Gastrocnemius medialis (tissue), 4 donors: ENCODE measurements at regions of chr10 and their contacts with region 1.

Region 1: DNA sequence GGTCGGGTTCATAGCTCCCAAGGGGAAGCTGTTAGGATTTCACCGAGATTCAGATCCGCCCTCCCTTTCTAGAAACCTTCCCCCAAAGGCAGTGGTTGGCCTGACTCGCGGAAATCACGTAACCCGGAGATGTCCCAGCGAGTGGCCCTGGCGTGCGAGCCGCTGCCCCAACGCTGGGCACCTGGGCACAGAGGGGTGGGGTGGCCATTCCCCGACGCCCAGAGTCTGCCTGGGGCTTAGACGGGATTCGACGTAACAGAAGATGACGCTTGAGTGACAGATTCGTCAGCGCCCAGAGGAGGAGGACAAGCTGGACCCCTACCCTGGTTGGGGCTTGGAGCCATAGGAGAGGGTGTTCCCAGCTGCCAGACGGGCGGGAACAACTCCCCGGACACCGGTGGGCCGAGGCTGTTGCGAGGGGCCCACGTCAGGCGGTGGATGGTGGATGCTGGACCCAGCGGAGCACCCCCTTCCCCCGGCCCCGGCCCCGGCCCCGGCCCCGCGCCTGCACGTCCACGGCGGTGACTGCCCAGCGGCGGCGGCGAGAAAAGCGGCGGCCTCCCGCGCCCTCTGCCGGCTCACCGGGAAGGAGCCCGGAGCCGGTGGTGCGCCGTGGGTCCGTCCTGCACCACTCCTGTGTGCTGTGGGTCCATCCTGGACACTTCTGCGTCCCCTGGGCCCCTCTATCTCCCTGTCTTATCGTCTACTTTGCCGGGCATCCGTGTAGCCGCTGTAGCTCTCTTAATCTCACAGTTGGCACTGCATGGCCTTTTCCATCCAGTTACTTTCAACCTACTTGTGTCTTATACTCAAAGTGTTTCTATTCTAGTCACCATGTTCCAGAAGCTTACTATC is 35.4 kb upstream of the KNDC1 start:
- DNase-seq: peak in 1 of 2 donors; percentile 18
- ATAC-seq: peak; percentile 73 to 89
- H3K4me3 ChIP-seq: no peak overlapping the region
- H3K27ac ChIP-seq: no peak overlapping the region
- H3K4me1 ChIP-seq: no peaks in the 10 kb centered on the region
- H3K27me3 ChIP-seq: peaks cover 0 to 8% (median 0%) of the 10 kb centered on the region in 3 donors
- CTCF ChIP-seq: peak; percentile 36 to 84 (median 55)
- POLR2A ChIP-seq: no peak

Region 2: GRCh38 chr10:132939957-132940790 is 184.4 kb before region 1 on chr10:
- in situ Hi-C with region 1: loop called in 2 of 4 experiments (anchors 10 to 25 kb)
- intact Hi-C with region 1: loop called (anchors 1 kb)
- DNase-seq: no peak
- ATAC-seq: peak in 1 of 2 donors; percentile 51
- H3K4me3 ChIP-seq: no peak overlapping the region
- H3K27ac ChIP-seq: no peak overlapping the region
- H3K4me1 ChIP-seq: no peaks in the 10 kb centered on the region
- H3K27me3 ChIP-seq: peaks cover 21 to 26% (median 24%) of the 10 kb centered on the region in 3 donors
- CTCF ChIP-seq: peak; percentile 44 to 75 (median 66)
- POLR2A ChIP-seq: no peak

Region 3: GRCh38 chr10:133039107-133039802 is 85.3 kb before region 1 on chr10:
- in situ Hi-C with region 1: no loop called
- intact Hi-C with region 1: loop called (anchors 10 kb)
- DNase-seq: no peak
- ATAC-seq: no peak
- H3K4me3 ChIP-seq: no peak overlapping the region
- H3K27ac ChIP-seq: no peak overlapping the region
- H3K4me1 ChIP-seq: no peaks in the 10 kb centered on the region
- H3K27me3 ChIP-seq: peaks cover 16 to 46% (median 38%) of the 10 kb centered on the region in 3 donors
- CTCF ChIP-seq: no peak
- POLR2A ChIP-seq: no peak